ENCODE measurements at regions of chr2 and their contacts with region 1.

Region 1: DNA sequence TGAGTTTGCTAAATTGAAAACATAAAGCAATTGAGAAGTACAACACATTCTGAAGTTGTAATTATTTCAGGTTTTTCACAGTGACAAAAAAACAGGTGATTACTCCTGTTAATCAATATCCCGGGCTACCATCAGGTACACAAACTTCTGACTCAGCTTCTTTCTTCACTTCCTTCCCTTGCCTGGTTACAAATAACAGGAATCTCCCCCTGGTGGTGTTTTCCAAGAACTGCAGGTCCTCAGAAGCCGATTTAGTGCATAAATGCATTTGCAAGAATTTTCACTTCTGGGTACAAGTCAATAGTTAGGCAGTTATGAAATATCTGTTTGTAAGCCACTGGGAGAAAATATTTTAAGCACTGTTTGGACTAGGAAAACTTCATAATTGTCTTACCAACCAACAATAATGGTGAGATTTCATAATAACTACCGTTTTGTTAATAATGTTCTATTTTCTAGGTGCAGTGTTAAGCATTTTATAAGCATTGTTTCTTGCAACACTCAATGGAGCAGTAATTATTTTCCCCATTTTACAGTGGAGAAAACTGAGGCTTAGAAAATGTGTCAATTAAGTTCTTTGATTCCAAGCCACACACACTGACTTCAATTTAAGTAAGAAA is 12.4 kb upstream of the GMCL1 start:
- DNase-seq: peak; percentile 61 to 87 (median 64)
- ATAC-seq: peak; percentile 84
- H3K4me3 ChIP-seq: no peak overlapping the region
- H3K27ac ChIP-seq: no peak overlapping the region
- H3K4me1 ChIP-seq: peaks cover 10 to 15% of the 10 kb centered on the region in 2 experiments; a peak in 4 of 5 replicates
- H3K27me3 ChIP-seq: no peaks in the 10 kb centered on the region
- CTCF ChIP-seq: peak; percentile 79 to 84 (median 80)
- EP300 ChIP-seq: no peak
- POLR2A ChIP-seq: no peak
- RAD21 ChIP-seq: peak; percentile 82 to 88

Region 2: GRCh38 chr2:69581774-69582581 is 235.1 kb before region 1 on chr2:
- CTCF ChIA-PET with region 1: no interaction called
- POLR2A ChIA-PET with region 1: no interaction called
- in situ Hi-C with region 1: no loop called
- intact Hi-C with region 1: no loop called
- DNase-seq: peak in 2 of 4 experiments; percentile 39 to 44
- ATAC-seq: peak; percentile 56
- H3K4me3 ChIP-seq: no peak overlapping the region
- H3K27ac ChIP-seq: peak overlapping the region; percentile 52
- H3K4me1 ChIP-seq: peaks cover 4 to 25% of the 10 kb centered on the region in 2 experiments; a peak in 4 of 5 replicates
- H3K27me3 ChIP-seq: no peaks in the 10 kb centered on the region
- CTCF ChIP-seq: no peak
- EP300 ChIP-seq: no peak
- POLR2A ChIP-seq: no peak
- RAD21 ChIP-seq: no peak

Region 3: DNA sequence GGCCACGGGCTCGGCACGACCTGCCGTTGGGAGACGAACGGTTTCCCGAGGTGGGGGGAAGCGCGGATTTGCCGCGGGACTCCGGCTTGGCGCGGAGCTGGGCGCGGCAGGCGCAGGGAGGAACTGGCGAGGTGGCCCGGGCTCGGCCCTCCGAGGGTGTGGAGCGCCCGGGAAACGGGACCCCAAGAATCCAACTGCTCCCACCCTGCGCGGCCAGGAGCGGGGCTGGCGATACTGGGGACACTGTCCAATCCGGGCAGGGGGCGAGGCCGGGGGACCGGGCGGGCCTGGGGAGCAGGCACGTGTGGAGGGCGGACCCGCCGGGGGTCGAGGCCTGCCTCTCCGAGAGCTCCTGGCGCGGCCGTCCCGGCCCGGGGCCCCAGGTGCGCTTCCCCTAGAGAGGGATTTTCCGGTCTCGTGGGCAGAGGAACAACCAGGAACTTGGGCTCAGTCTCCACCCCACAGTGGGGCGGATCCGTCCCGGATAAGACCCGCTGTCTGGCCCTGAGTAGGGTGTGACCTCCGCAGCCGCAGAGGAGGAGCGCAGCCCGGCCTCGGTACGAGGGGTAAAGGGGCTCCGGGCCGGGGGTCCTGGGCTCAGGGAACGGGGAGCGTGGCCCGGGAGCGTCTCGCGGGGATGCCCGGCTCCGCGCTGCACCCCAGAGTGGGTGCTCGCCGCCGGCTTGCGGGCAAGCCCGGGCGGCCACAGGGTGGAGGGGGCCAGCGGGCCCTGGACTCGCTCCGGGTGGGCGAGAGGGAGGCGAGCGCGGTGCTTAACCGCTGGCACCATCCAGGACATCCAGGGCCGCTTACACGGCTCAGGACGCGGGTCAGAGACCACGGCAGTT is 75.2 kb before region 1 on chr2 and contains the start of gene ANXA4:
- CTCF ChIA-PET with region 1: interaction called, 3 read pairs
- POLR2A ChIA-PET with region 1: no interaction called
- in situ Hi-C with region 1: no loop called
- intact Hi-C with region 1: loop called (anchors 5 kb)
- DNase-seq: peak; percentile 80 to 86 (median 82)
- ATAC-seq: peak; percentile 93
- H3K4me3 ChIP-seq: peak within 1 kb of the TSS; percentile 66
- H3K27ac ChIP-seq: peak within 1 kb of the TSS; percentile 73
- H3K4me1 ChIP-seq: peaks cover 18 to 25% of the 10 kb centered on the region in 2 experiments
- H3K27me3 ChIP-seq: no peaks in the 10 kb centered on the region
- CTCF ChIP-seq: no peak
- EP300 ChIP-seq: no peak
- POLR2A ChIP-seq: peak; percentile 77
- RAD21 ChIP-seq: no peak
- polyA plus RNA-seq, gene ANXA4: 11.6 to 13.2 TPM

Region 4: GRCh38 chr2:69798909-69799526 is 18.0 kb before region 1 on chr2:
- CTCF ChIA-PET with region 1: no interaction called
- POLR2A ChIA-PET with region 1: interaction called, 16 read pairs
- in situ Hi-C with region 1: no loop called
- intact Hi-C with region 1: no loop called
- DNase-seq: peak; percentile 89 to 97 (median 89)
- ATAC-seq: peak; percentile 95
- H3K4me3 ChIP-seq: peak overlapping the region; percentile 30
- H3K27ac ChIP-seq: peak overlapping the region; percentile 53; the same call in 1 of the 3 replicates
- H3K4me1 ChIP-seq: peaks cover 3 to 23% of the 10 kb centered on the region in 2 experiments; a peak in 4 of 5 replicates
- H3K27me3 ChIP-seq: no peaks in the 10 kb centered on the region; a peak in 1 of 5 replicates
- CTCF ChIP-seq: no peak
- EP300 ChIP-seq: peak; percentile 95
- POLR2A ChIP-seq: no peak
- RAD21 ChIP-seq: peak in 1 of 2 experiments; percentile 26; a peak in 3 of 4 replicates

Region 5: DNA sequence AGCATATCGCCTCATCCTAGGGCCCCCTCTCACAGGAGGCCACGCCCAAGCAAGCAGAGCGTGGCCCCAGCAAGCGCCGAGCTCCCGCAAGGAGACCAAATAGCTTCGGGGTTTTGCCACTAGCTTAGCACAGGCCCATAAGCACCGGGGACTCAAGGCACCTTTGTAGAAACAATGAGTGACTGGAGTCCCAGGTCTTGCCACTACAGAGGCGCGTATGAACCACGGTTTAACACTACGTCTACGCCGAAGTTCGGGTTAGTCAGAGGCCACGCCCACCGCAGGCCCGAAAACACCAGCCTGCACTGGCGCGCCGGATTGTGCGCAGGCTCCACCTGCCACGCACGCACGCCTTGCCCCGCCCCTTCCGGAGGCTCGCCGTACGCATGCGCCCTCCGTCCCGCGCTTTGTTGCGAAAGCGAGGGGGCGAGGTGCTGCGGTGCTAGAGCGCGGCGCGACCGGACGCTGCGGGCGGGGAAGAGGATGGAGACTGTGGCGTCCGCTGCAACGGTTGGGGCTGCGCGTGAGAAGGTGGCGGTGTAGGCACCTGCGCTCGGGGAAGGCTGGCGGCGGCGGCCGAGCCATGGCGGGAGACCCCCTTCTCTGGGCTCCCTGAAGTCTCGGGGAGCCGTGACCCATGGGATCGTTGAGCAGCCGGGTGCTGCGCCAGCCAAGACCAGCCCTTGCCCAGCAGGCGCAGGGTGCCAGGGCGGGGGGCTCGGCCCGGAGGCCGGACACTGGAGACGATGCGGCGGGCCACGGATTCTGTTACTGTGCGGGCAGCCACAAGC is 12.4 kb after region 1 on chr2 and contains the start of gene GMCL1:
- CTCF ChIA-PET with region 1: no interaction called
- POLR2A ChIA-PET with region 1: interaction called, 18 read pairs
- in situ Hi-C with region 1: no loop called
- intact Hi-C with region 1: no loop called
- DNase-seq: peak; percentile 92 to 98 (median 94)
- ATAC-seq: peak; percentile 91
- H3K4me3 ChIP-seq: peak within 1 kb of the TSS; percentile 75
- H3K27ac ChIP-seq: peak within 1 kb of the TSS; percentile 93
- H3K4me1 ChIP-seq: peaks cover 20 to 26% of the 10 kb centered on the region in 2 experiments
- H3K27me3 ChIP-seq: no peaks in the 10 kb centered on the region
- CTCF ChIP-seq: no peak
- EP300 ChIP-seq: 0 out of 2 replicates have a peak, but pooled peaks have one; percentile 18
- POLR2A ChIP-seq: peak; percentile 95
- RAD21 ChIP-seq: no peak
- polyA plus RNA-seq, gene GMCL1: 7.0 to 8.1 TPM

Region 6: DNA sequence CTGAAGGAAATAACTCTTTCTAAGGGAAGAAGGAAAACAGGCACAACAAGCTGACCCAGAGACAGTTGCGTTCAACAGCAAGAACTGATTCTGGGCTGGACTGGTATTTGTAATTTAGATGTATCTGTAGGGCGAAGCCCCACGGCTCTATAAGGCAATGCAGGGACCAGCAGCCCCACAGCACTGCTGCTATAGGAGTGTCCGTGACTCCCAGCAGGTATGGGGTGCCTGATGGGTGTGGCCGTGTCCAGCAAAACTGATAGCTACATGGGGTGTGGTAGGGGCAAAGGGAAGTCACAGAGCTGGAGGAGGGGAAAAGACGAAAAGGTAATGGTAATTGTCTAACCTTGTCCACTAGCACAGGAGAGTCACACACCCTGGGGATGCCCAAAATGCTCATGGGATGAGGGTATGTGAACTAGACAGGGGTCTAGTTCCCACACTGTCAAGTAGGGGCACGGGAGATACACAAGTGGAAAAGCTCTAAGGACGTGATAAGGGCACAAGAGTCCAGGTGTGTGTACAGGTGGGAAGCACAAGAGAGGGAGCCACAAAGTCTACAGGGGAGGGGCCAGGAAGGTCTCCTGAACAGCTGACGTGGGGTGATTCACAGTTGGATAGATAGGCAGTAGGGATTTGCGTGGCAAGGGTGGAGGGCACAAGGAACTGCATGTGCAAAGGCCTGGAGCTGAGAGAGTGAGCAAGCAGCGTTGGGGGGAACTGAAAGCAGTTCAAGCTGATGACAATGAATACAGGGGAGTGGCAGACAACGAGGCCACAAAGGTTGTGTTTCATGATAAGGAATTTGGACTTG is 192.9 kb after region 1 on chr2:
- CTCF ChIA-PET with region 1: no interaction called
- POLR2A ChIA-PET with region 1: no interaction called
- in situ Hi-C with region 1: no loop called
- intact Hi-C with region 1: no loop called
- DNase-seq: peak; percentile 63 to 74 (median 69)
- ATAC-seq: peak; percentile 75
- H3K4me3 ChIP-seq: no peak overlapping the region; the same call in 1 of the 2 replicates
- H3K27ac ChIP-seq: peak overlapping the region; percentile 72
- H3K4me1 ChIP-seq: peaks cover 30 to 41% of the 10 kb centered on the region in 2 experiments
- H3K27me3 ChIP-seq: no peaks in the 10 kb centered on the region
- CTCF ChIP-seq: no peak
- EP300 ChIP-seq: no peak
- POLR2A ChIP-seq: no peak
- RAD21 ChIP-seq: no peak